Naive thymus-derived CD8-positive, alpha-beta T cell (primary cell): ENCODE measurements at regions of chr5 and their contacts with region 1.

Region 1: GRCh38 chr5:151771259-151772028 is at the start of gene G3BP1:
- DNase-seq: peak; percentile 92 to 100 (median 99)
- ATAC-seq: peak; percentile 77 to 79
- H3K4me3 Mint-ChIP-seq: peak within 1 kb of the TSS in 9 of 10 donors; percentile 83 to 98 (median 91)
- H3K27ac Mint-ChIP-seq: peak within 1 kb of the TSS in 8 of 10 donors; percentile 54 to 95 (median 92)
- H3K4me1 Mint-ChIP-seq: peaks cover 20 to 46% (median 45%) of the 10 kb centered on the region in 4 donors
- H3K27me3 Mint-ChIP-seq: no peaks in the 10 kb centered on the region
- polyA plus RNA-seq, gene G3BP1: 128 to 145 (median 145) TPM

Region 2: GRCh38 chr5:151447174-151448037 is 324.0 kb before region 1 on chr5 and contains the start of gene SLC36A1:
- POLR2A ChIA-PET with region 1: interaction called, 13 read pairs
- DNase-seq: peak; percentile 83 to 94 (median 90)
- ATAC-seq: peak; percentile 90 to 94
- H3K4me3 Mint-ChIP-seq: peak within 1 kb of the TSS; percentile 95 to 98 (median 96)
- H3K27ac Mint-ChIP-seq: peak within 1 kb of the TSS; percentile 81 to 96 (median 92)
- H3K4me1 Mint-ChIP-seq: peaks cover 22 to 29% (median 25%) of the 10 kb centered on the region in 4 donors
- H3K27me3 Mint-ChIP-seq: peaks cover 3 to 23% (median 12%) of the 10 kb centered on the region in 5 donors
- polyA plus RNA-seq, gene SLC36A1: 0.61 to 1.6 (median 0.81) TPM

Region 3: GRCh38 chr5:151612689-151613427 is 158.6 kb before region 1 on chr5:
- POLR2A ChIA-PET with region 1: interaction called, 10 read pairs
- DNase-seq: peak in 8 of 10 donors; percentile 25 to 74 (median 53)
- ATAC-seq: peak; percentile 84 to 94
- H3K4me3 Mint-ChIP-seq: peak overlapping the region in 9 of 10 donors; percentile 17 to 78 (median 73)
- H3K27ac Mint-ChIP-seq: peak overlapping the region; percentile 68 to 95 (median 84)
- H3K4me1 Mint-ChIP-seq: peaks cover 37 to 64% (median 47%) of the 10 kb centered on the region in 4 donors
- H3K27me3 Mint-ChIP-seq: peaks cover 0 to 12% (median 0%) of the 10 kb centered on the region in 5 donors

Region 4: GRCh38 chr5:151758430-151759241 is 12.8 kb before region 1 on chr5 and contains the start of gene ATOX1:
- POLR2A ChIA-PET with region 1: interaction called, 152 read pairs
- DNase-seq: peak; percentile 83 to 93 (median 90)
- ATAC-seq: peak; percentile 97
- H3K4me3 Mint-ChIP-seq: peak within 1 kb of the TSS; percentile 85 to 98 (median 92)
- H3K27ac Mint-ChIP-seq: peak within 1 kb of the TSS; percentile 88 to 98 (median 96)
- H3K4me1 Mint-ChIP-seq: peaks cover 14 to 46% (median 41%) of the 10 kb centered on the region in 4 donors
- H3K27me3 Mint-ChIP-seq: no peaks in the 10 kb centered on the region
- polyA plus RNA-seq, gene ATOX1: 50.9 to 58.7 (median 58.0) TPM